ENCODE measurements at regions of chr14 and their contacts with region 1.

Region 1: GRCh38 chr14:58297762-58298476 is 436 bp upstream of the ARID4A start:
- DNase-seq: peak; percentile 99
- ATAC-seq: peak; percentile 88
- H3K4me3 Mint-ChIP-seq: no peak overlapping the region
- H3K27ac Mint-ChIP-seq: no peak overlapping the region
- H3K4me1 Mint-ChIP-seq: peaks cover 37% of the 10 kb centered on the region
- H3K27me3 Mint-ChIP-seq: no peaks in the 10 kb centered on the region
- CTCF ChIP-seq: no peak

Region 2: GRCh38 chr14:57634340-57634739 is 663.6 kb before region 1 on chr14:
- CTCF ChIA-PET with region 1: no interaction called
- POLR2A ChIA-PET with region 1: no interaction called
- intact Hi-C with region 1: no loop called
- DNase-seq: no peak
- ATAC-seq: no peak
- H3K4me3 Mint-ChIP-seq: no peak overlapping the region
- H3K27ac Mint-ChIP-seq: no peak overlapping the region
- H3K4me1 Mint-ChIP-seq: no peaks in the 10 kb centered on the region
- H3K27me3 Mint-ChIP-seq: no peaks in the 10 kb centered on the region
- CTCF ChIP-seq: no peak

Region 3: DNA sequence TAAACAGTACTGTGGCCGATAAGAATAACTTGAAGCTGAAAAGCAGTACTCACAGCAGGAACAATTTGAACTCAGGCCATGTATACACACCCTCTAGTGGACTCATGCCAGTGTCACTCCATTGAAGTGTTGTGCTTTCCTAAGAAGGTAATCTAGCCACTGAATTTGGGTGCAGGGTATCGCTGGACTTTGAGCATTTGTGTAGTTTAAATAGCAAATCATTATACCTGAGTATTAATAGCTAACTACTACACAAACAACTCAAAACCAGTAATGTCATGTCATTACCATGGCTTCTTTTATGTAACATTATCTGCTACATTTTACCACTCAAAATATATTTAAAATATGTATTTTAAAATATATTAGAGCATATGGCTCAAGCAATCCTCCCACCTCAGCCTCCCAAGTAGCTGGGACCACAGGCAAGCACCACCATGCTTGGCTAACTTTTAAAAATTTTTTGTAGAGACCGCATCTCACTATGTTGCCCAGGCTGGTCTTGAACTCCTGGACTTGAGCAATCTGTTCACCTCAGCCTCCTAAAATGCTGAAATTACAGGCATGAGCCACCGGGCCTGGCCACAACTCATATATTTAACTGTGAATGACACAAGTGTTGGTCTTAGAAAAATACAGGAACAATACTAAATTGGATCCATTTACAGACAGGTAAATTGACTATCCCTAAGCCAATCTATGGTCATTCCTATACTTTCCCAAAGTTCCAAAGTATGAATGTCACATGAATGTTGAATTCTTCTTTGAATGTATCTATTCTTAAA is 25.1 kb before region 1 on chr14:
- CTCF ChIA-PET with region 1: interaction called, 4 read pairs
- POLR2A ChIA-PET with region 1: interaction called, 18 read pairs
- intact Hi-C with region 1: no loop called
- DNase-seq: no peak
- ATAC-seq: no peak
- H3K4me3 Mint-ChIP-seq: no peak overlapping the region
- H3K27ac Mint-ChIP-seq: peak overlapping the region; percentile 49
- H3K4me1 Mint-ChIP-seq: peaks cover 41% of the 10 kb centered on the region
- H3K27me3 Mint-ChIP-seq: no peaks in the 10 kb centered on the region
- CTCF ChIP-seq: no peak

Region 4: GRCh38 chr14:58287607-58288042 is 10.3 kb before region 1 on chr14:
- CTCF ChIA-PET with region 1: no interaction called
- POLR2A ChIA-PET with region 1: interaction called, 13 read pairs
- intact Hi-C with region 1: no loop called
- DNase-seq: no peak
- ATAC-seq: no peak
- H3K4me3 Mint-ChIP-seq: no peak overlapping the region
- H3K27ac Mint-ChIP-seq: peak overlapping the region; percentile 59
- H3K4me1 Mint-ChIP-seq: peaks cover 67% of the 10 kb centered on the region
- H3K27me3 Mint-ChIP-seq: no peaks in the 10 kb centered on the region
- CTCF ChIP-seq: no peak

Region 5: DNA sequence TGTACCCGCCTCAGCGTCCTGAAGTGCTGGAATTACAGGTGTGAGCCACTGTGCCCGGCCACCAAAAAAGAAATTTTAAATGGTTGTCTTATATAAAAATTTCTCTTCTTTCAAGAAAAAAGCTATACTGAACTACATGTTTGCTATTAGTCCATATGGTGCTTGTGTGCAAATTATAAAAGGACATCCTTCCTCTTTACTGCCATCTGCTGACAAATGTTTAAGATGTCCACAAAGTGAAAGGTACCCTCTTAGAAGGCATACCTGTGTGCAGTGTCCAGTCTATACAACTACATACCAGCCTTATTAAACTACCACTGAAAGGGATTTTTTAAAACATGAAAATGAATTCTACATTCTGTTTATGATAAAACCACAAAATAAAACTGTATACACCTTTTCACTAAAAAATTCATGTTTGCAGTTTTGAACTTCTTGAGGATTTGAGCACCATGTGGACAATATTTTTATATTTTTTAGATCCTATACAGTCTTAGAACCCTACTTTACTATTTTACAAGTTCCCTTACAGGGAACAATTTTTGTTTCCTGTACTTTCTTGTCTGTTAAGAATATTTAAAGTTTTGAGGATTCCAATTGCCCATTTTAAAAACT is 65.0 kb after region 1 on chr14:
- CTCF ChIA-PET with region 1: no interaction called
- POLR2A ChIA-PET with region 1: no interaction called
- intact Hi-C with region 1: no loop called
- DNase-seq: no peak
- ATAC-seq: peak; percentile 61
- H3K4me3 Mint-ChIP-seq: no peak overlapping the region
- H3K27ac Mint-ChIP-seq: no peak overlapping the region
- H3K4me1 Mint-ChIP-seq: peaks cover 8% of the 10 kb centered on the region
- H3K27me3 Mint-ChIP-seq: no peaks in the 10 kb centered on the region
- CTCF ChIP-seq: no peak

Region 6: GRCh38 chr14:58427281-58428117 is 129.6 kb after region 1 on chr14 and contains the starts of genes KIAA0586 and TIMM9:
- CTCF ChIA-PET with region 1: no interaction called
- POLR2A ChIA-PET with region 1: interaction called, 20 read pairs
- intact Hi-C with region 1: loop called (anchors 10 kb)
- DNase-seq: peak; percentile 98
- ATAC-seq: peak; percentile 91
- H3K4me3 Mint-ChIP-seq: peak within 1 kb of the TSS; percentile 88
- H3K27ac Mint-ChIP-seq: peak within 1 kb of the TSS; percentile 99
- H3K4me1 Mint-ChIP-seq: peaks cover 33% of the 10 kb centered on the region
- H3K27me3 Mint-ChIP-seq: no peaks in the 10 kb centered on the region
- CTCF ChIP-seq: no peak
- total RNA-seq, gene KIAA0586: 23.4 TPM
- total RNA-seq, gene TIMM9: 63.9 to 71.8 TPM

Region 7: DNA sequence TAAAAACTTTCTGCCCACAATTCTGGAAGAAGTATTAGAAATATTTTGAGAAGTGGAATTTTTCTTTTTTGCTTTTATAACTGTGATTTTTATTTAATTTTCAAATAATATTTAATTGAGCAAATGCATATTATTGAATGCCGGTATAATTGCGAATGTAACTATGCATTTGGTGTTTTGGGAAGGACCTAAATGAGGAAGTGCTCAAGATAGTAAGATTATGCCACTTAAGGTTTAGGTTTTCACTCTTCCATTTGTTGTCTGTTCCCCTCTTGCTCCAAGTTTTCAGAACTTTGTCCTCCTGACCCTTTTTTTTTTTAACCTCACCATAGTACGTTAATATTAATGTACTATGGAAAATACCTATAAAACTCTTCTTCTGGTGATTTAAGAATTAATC is 215.4 kb after region 1 on chr14:
- CTCF ChIA-PET with region 1: no interaction called
- POLR2A ChIA-PET with region 1: no interaction called
- intact Hi-C with region 1: no loop called
- DNase-seq: no peak
- ATAC-seq: no peak
- H3K4me3 Mint-ChIP-seq: no peak overlapping the region
- H3K27ac Mint-ChIP-seq: no peak overlapping the region
- H3K4me1 Mint-ChIP-seq: no peaks in the 10 kb centered on the region
- H3K27me3 Mint-ChIP-seq: no peaks in the 10 kb centered on the region
- CTCF ChIP-seq: no peak